ENCODE measurements at regions of chr2 and their contacts with region 1.

Region 1: GRCh38 chr2:229273723-229274338 is 2.7 kb upstream of the PID1 start:
- DNase-seq: peak; percentile 74
- H3K4me3 ChIP-seq: peak overlapping the region in 1 of 2 donors; percentile 22
- H3K27ac ChIP-seq: peak overlapping the region; percentile 37 to 60
- H3K4me1 ChIP-seq: peaks cover 5% of the 10 kb centered on the region
- H3K27me3 ChIP-seq: no peaks in the 10 kb centered on the region
- CTCF ChIP-seq: peak; percentile 51 to 85 (median 74)
- POLR2A ChIP-seq: no peak

Region 2: GRCh38 chr2:227890495-227891079 is 1383.2 kb before region 1 on chr2:
- intact Hi-C with region 1: loop called (anchors 5 kb)
- DNase-seq: no peak
- H3K4me3 ChIP-seq: no peak overlapping the region
- H3K27ac ChIP-seq: no peak overlapping the region
- H3K4me1 ChIP-seq: no peaks in the 10 kb centered on the region
- H3K27me3 ChIP-seq: no peaks in the 10 kb centered on the region
- CTCF ChIP-seq: peak in 3 of 4 experiments; percentile 58 to 64 (median 60)
- POLR2A ChIP-seq: no peak

Region 3: GRCh38 chr2:228689053-228689452 is 584.8 kb before region 1 on chr2:
- intact Hi-C with region 1: loop called (anchors 5 kb)
- DNase-seq: no peak
- H3K4me3 ChIP-seq: no peak overlapping the region
- H3K27ac ChIP-seq: no peak overlapping the region
- H3K4me1 ChIP-seq: no peaks in the 10 kb centered on the region
- H3K27me3 ChIP-seq: no peaks in the 10 kb centered on the region
- CTCF ChIP-seq: no peak
- POLR2A ChIP-seq: no peak

Region 4: DNA sequence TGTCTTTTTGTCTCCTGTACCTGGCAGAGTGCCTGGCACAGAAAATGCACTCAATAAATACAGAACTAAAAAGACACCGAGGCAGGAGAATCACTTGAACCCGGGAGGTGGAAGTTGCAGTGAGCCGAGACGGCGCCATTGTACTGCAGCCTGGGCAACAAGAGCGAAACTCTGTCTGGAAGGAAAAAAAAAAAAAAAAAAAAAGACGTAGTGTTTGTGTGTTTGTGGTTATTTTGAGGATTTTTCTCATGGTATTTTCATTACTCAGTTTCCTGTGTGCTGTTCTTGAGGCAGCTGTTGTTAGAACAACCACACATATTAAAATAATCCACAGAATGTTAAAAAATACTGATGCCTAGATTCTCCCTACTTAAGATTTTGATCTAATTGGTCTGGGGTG is 573.2 kb before region 1 on chr2:
- intact Hi-C with region 1: loop called (anchors 5 kb)
- DNase-seq: no peak
- H3K4me3 ChIP-seq: no peak overlapping the region
- H3K27ac ChIP-seq: no peak overlapping the region
- H3K4me1 ChIP-seq: no peaks in the 10 kb centered on the region
- H3K27me3 ChIP-seq: no peaks in the 10 kb centered on the region
- CTCF ChIP-seq: no peak
- POLR2A ChIP-seq: no peak

Region 5: DNA sequence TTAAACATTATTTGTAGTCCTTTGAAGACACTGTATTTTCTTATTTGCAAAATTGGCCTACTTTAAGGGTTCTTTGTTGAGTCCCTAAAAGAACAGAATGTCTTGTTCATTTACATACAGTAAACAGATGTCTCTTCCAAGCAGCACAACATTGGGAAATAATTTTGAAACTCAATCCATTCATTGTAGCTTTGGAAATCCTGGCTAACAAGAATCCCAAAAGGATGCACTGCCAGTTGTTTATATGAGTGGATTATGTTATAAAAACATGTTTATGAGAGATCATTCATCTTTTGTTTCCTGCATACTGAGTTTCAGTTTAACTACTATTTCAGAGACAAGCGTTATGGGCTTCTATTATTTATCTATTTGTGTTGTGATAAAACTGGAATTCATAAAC is 502.1 kb before region 1 on chr2:
- intact Hi-C with region 1: loop called (anchors 5 kb)
- DNase-seq: no peak
- H3K4me3 ChIP-seq: no peak overlapping the region
- H3K27ac ChIP-seq: peak overlapping the region in 1 of 2 donors; percentile 32
- H3K4me1 ChIP-seq: no peaks in the 10 kb centered on the region
- H3K27me3 ChIP-seq: no peaks in the 10 kb centered on the region
- CTCF ChIP-seq: no peak
- POLR2A ChIP-seq: no peak

Region 6: DNA sequence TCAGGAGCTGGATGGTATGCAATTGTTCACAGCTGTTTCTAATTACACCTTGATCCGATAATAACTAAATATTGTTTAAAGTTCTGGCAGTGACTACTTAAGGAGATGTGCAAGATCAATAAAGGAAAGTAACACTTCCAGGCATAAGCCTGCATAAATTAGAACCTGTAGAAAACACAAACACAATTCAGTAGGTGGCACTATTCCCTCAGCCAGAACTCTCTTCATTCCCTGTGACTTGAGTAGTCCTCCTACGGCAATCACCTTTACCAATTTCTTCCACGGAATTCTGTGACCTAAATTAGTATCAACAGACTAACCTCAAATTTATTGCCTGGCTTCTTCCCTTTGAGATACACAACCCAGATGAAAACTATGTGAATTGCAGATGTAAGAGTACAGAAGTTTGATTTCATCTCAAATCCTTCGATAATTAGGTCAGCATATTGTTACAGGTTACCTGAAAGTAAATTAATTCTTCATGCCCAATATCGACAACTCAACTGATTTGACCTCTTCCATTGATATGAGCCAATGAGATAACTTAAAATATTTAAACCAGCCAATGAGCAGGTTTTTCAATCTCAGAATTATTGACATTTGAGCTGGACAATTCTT is 140.6 kb before region 1 on chr2:
- intact Hi-C with region 1: loop called (anchors 5 kb)
- DNase-seq: peak; percentile 30
- H3K4me3 ChIP-seq: no peak overlapping the region
- H3K27ac ChIP-seq: no peak overlapping the region
- H3K4me1 ChIP-seq: no peaks in the 10 kb centered on the region
- H3K27me3 ChIP-seq: no peaks in the 10 kb centered on the region
- CTCF ChIP-seq: peak; percentile 17 to 63 (median 39)
- POLR2A ChIP-seq: no peak

Region 7: GRCh38 chr2:229586746-229587705 is 313.2 kb after region 1 on chr2:
- intact Hi-C with region 1: loop called (anchors 10 kb)
- DNase-seq: peak; percentile 67
- H3K4me3 ChIP-seq: no peak overlapping the region
- H3K27ac ChIP-seq: peak overlapping the region in 1 of 2 donors; percentile 43
- H3K4me1 ChIP-seq: no peaks in the 10 kb centered on the region
- H3K27me3 ChIP-seq: no peaks in the 10 kb centered on the region
- CTCF ChIP-seq: peak; percentile 69 to 84 (median 81)
- POLR2A ChIP-seq: no peak

Measured in prostate gland (tissue), 2 donors.